ENCODE measurements at regions of chr5 and their contacts with region 1.

Region 1: GRCh38 chr5:62214701-62215100 is 91.3 kb upstream of the KIF2A start:
- DNase-seq: no peak
- H3K4me3 ChIP-seq: no peak overlapping the region
- H3K27ac ChIP-seq: no peak overlapping the region
- H3K4me1 ChIP-seq: no peaks in the 10 kb centered on the region
- H3K27me3 ChIP-seq: no peaks in the 10 kb centered on the region
- CTCF ChIP-seq: no peak

Region 2: DNA sequence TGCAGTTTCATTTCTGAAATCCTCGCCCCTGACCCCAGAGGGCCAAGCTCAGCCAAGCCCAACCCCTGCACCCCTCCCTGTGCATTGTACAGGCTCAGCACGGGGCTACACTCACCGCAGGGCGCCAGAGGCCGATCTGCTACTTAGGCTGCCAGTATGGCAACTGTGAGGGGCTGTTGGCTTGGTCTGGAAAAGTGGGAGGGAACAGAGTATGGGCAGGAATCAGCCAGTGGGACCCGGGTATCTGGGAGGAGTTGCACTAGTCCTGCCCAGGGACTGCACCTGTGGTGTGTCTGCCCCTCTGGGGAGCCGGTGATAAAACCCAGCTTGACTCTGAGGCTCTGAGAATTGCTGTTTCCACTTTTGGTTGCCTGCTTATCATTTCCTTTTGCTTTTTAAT is 76.1 kb before region 1 on chr5:
- intact Hi-C with region 1: no loop called
- DNase-seq: no peak
- H3K4me3 ChIP-seq: no peak overlapping the region
- H3K27ac ChIP-seq: no peak overlapping the region
- H3K4me1 ChIP-seq: no peaks in the 10 kb centered on the region
- H3K27me3 ChIP-seq: no peaks in the 10 kb centered on the region
- CTCF ChIP-seq: no peak

Region 3: DNA sequence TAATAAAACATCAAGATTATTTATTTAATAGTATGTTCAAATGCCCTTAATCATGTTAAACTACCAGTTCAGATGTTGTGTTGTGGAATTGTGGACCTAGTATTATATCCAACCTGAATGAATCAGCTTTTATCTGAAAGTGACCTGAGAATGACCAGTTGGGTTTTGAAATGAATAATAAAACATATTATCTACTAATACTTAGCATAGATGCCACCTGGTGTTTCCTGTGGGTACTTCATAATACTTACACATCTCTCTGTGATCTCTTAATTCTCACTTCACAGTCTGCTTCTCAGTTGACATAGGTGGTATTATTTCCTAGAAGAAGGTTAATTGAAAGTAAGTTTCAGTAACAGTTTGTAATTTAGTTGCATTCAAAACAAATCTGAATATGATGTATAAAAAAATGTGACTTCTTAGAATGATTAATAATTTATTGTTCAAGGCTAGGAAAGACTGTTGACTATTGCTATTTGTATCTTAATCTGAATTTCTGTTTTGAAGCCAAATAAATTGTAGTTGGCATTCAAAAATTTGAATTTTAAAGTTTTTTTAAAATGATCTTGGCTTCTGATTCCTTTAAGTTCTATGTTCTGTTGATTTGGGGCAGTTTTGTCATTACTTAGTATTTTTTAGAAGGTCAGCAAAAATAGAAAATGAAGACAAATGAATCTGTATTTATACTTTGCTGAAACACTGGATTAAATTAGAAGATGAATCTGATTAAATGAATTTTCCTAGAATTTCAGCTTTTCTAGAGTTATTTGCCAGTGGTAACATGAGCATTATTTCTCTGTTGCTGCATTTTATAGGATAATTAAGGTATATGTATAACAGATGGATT is 139.6 kb after region 1 on chr5:
- intact Hi-C with region 1: loop called (anchors 10 kb)
- DNase-seq: no peak
- H3K4me3 ChIP-seq: no peak overlapping the region
- H3K27ac ChIP-seq: no peak overlapping the region
- H3K4me1 ChIP-seq: no peaks in the 10 kb centered on the region
- H3K27me3 ChIP-seq: no peaks in the 10 kb centered on the region
- CTCF ChIP-seq: peak; percentile 65

Region 4: GRCh38 chr5:62731022-62731421 is 516.3 kb after region 1 on chr5:
- intact Hi-C with region 1: no loop called
- DNase-seq: no peak
- H3K4me3 ChIP-seq: no peak overlapping the region
- H3K27ac ChIP-seq: no peak overlapping the region
- H3K4me1 ChIP-seq: no peaks in the 10 kb centered on the region
- H3K27me3 ChIP-seq: no peaks in the 10 kb centered on the region
- CTCF ChIP-seq: no peak

Measured in colonic mucosa (tissue), 4 donors.